CD4-positive, alpha-beta memory T cell (primary cell): ENCODE measurements at regions of chr11 and their contacts with region 1.

Region 1: GRCh38 chr11:12200279-12201010 is 90.1 kb downstream of the MICAL2 start:
- DNase-seq: no peak
- H3K4me3 ChIP-seq: no peak overlapping the region
- H3K4me3 Mint-ChIP-seq: peak overlapping the region in 4 of 8 donors; percentile 9 to 93 (median 66)
- H3K27ac ChIP-seq: peak overlapping the region; percentile 52
- H3K27ac Mint-ChIP-seq: peak overlapping the region; percentile 87 to 98 (median 94)
- H3K4me1 ChIP-seq: peaks cover 59% of the 10 kb centered on the region
- H3K4me1 Mint-ChIP-seq: peaks cover 48 to 67% (median 57%) of the 10 kb centered on the region in 4 donors
- H3K27me3 ChIP-seq: no peaks in the 10 kb centered on the region
- H3K27me3 Mint-ChIP-seq: no peaks in the 10 kb centered on the region

Region 2: GRCh38 chr11:12110201-12110713 is 90.2 kb before region 1 on chr11 and contains the start of gene MICAL2:
- CTCF ChIA-PET with region 1: no interaction called
- POLR2A ChIA-PET with region 1: interaction called, 5 read pairs
- intact Hi-C with region 1: loop called (anchors 5 kb)
- DNase-seq: peak; percentile 82 to 86 (median 84)
- H3K4me3 ChIP-seq: peak within 1 kb of the TSS; percentile 60 to 61
- H3K4me3 Mint-ChIP-seq: peak within 1 kb of the TSS; percentile 82 to 90 (median 85)
- H3K27ac ChIP-seq: peak within 1 kb of the TSS; percentile 32
- H3K27ac Mint-ChIP-seq: peak within 1 kb of the TSS; percentile 63 to 92 (median 82)
- H3K4me1 ChIP-seq: peaks cover 43% of the 10 kb centered on the region
- H3K4me1 Mint-ChIP-seq: peaks cover 17 to 34% (median 23%) of the 10 kb centered on the region in 4 donors
- H3K27me3 ChIP-seq: no peaks in the 10 kb centered on the region
- H3K27me3 Mint-ChIP-seq: no peaks in the 10 kb centered on the region
- total RNA-seq, gene MICAL2: 33.3 to 38.8 TPM

Region 3: GRCh38 chr11:12189543-12190235 is 10.8 kb before region 1 on chr11:
- CTCF ChIA-PET with region 1: interaction called, 7 read pairs
- POLR2A ChIA-PET with region 1: interaction called, 22 read pairs
- intact Hi-C with region 1: no loop called
- DNase-seq: peak; percentile 60 to 73 (median 66)
- H3K4me3 ChIP-seq: peak overlapping the region in 1 of 2 donors; percentile 15
- H3K4me3 Mint-ChIP-seq: peak overlapping the region; percentile 56 to 84 (median 74)
- H3K27ac ChIP-seq: peak overlapping the region; percentile 45
- H3K27ac Mint-ChIP-seq: peak overlapping the region; percentile 8 to 95 (median 87)
- H3K4me1 ChIP-seq: peaks cover 40% of the 10 kb centered on the region
- H3K4me1 Mint-ChIP-seq: peaks cover 21 to 60% (median 37%) of the 10 kb centered on the region in 4 donors
- H3K27me3 ChIP-seq: no peaks in the 10 kb centered on the region
- H3K27me3 Mint-ChIP-seq: no peaks in the 10 kb centered on the region